ENCODE measurements at regions of chr7 and their contacts with region 1.

Region 1: DNA sequence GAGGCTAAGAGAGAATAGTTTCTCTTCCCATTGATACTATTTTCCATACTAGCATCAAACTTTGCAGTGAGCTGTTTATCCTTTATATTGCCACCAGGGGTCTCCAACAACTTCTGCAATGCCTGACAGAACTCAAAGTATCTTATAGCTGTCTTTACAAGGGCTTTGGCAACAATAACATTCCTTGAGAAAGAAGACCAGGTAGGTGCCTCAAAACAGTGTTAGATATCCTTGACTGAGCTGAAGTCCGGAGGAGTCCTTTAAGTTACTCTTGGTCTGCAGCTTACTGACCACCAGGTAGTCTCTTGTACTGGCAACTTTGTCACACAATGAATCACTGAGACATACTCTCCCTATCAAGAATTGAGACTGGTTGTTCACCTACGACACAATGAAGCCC is 30.0 kb upstream of the TES start:
- DNase-seq: peak; percentile 73
- ATAC-seq: peak; percentile 90
- H3K4me3 ChIP-seq: no peak overlapping the region
- H3K27ac ChIP-seq: peak overlapping the region; percentile 67; the same call in 1 of the 2 replicates
- H3K4me1 ChIP-seq: peaks cover 3% of the 10 kb centered on the region; the same call in 1 of the 2 replicates
- H3K27me3 ChIP-seq: no peaks in the 10 kb centered on the region
- CTCF ChIP-seq: peak; percentile 79

Region 2: GRCh38 chr7:116087291-116087690 is 93.0 kb before region 1 on chr7:
- CTCF ChIA-PET with region 1: no interaction called
- POLR2A ChIA-PET with region 1: no interaction called
- in situ Hi-C with region 1: no loop called
- intact Hi-C with region 1: no loop called
- DNase-seq: no peak
- ATAC-seq: no peak
- H3K4me3 ChIP-seq: no peak overlapping the region
- H3K27ac ChIP-seq: no peak overlapping the region
- H3K4me1 ChIP-seq: no peaks in the 10 kb centered on the region
- H3K27me3 ChIP-seq: no peaks in the 10 kb centered on the region
- CTCF ChIP-seq: no peak

Region 3: GRCh38 chr7:116218051-116218645 is 37.8 kb after region 1 on chr7:
- CTCF ChIA-PET with region 1: interaction called, 3 read pairs
- POLR2A ChIA-PET with region 1: no interaction called
- in situ Hi-C with region 1: no loop called
- intact Hi-C with region 1: loop called (anchors 5 kb)
- DNase-seq: no peak
- ATAC-seq: peak; percentile 90
- H3K4me3 ChIP-seq: peak overlapping the region in 1 of 2 experiments; percentile 23; a peak in 2 of 4 replicates
- H3K27ac ChIP-seq: peak overlapping the region; percentile 83
- H3K4me1 ChIP-seq: peaks cover 99% of the 10 kb centered on the region
- H3K27me3 ChIP-seq: no peaks in the 10 kb centered on the region
- CTCF ChIP-seq: no peak

Region 4: DNA sequence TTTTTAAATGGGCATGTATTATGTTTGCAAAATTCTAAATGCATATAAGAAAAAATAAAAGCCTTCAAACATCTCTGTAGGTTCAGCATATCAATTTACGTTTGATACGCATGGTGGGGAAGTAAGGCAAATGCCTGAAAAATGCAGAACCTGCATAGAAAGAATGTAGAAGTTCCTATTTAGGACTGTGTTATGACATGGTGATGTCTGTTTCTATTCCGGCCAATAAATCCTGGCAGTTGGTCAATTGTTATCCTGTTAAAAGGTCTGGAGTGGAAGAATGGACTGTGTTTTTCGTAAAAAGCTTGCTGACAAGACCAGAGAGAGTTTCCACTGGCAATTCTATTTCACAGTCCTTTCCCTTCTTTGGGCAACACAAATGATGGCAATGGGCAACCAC is 269.6 kb after region 1 on chr7:
- CTCF ChIA-PET with region 1: no interaction called
- POLR2A ChIA-PET with region 1: no interaction called
- in situ Hi-C with region 1: no loop called
- intact Hi-C with region 1: no loop called
- DNase-seq: no peak
- ATAC-seq: no peak
- H3K4me3 ChIP-seq: no peak overlapping the region
- H3K27ac ChIP-seq: peak overlapping the region; percentile 96
- H3K4me1 ChIP-seq: peaks cover 26% of the 10 kb centered on the region
- H3K27me3 ChIP-seq: no peaks in the 10 kb centered on the region
- CTCF ChIP-seq: no peak